Upper lobe of right lung (tissue), 1 donor: ENCODE measurements at regions of chr2 and their contacts with region 1.

Region 1: GRCh38 chr2:96951093-96951654 is 35.2 kb downstream of the FAM178B start:
- DNase-seq: peak; percentile 89
- ATAC-seq: peak; percentile 95
- H3K4me3 ChIP-seq: no peak overlapping the region
- H3K27ac ChIP-seq: no peak overlapping the region
- H3K4me1 ChIP-seq: peaks cover 20% of the 10 kb centered on the region
- H3K27me3 ChIP-seq: no peaks in the 10 kb centered on the region
- CTCF ChIP-seq: peak; percentile 89

Region 2: DNA sequence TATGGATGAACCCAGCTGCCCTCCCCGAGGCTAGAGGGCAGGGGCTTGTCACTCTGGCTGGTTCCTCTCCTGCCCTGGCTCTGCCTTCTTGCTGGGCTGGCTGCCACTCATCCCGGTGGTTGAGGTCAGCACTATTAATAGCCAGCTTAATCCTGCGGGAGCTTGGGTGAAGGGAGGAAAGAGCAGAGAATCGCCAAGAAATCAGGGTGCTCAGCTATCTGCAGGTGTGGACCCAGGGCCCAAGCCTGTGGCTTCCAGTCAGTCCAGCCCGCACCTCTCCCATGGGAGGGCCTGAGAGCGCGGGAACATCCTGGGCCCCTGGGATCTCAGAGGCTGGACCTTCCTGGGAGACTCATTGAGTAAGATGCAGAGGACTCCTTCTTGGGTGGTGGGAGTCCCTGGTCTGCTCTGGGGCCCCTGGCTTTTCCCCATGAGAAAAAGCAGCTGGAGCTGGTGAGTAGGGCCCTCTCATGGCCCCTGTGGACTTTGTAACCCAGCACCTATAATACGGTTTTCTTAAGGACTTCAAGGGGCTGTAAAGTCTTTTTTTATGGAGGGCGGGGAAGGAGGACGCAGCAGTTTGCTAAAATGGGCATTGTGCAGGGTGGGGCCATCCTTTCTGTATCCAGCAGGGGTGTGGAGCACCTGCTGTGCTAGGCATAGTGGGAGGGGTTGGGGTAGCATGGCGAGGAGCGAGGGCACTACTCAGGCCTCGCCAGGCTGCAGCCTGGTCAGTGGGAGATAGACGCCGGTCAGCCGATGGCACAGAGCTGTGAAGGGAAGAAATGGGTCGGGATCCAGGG is 162.5 kb before region 1 on chr2:
- intact Hi-C with region 1: no loop called
- DNase-seq: no peak
- ATAC-seq: peak; percentile 64
- H3K4me3 ChIP-seq: no peak overlapping the region
- H3K27ac ChIP-seq: no peak overlapping the region
- H3K4me1 ChIP-seq: peaks cover 12% of the 10 kb centered on the region
- H3K27me3 ChIP-seq: no peaks in the 10 kb centered on the region
- CTCF ChIP-seq: no peak

Region 3: GRCh38 chr2:96868555-96869280 is 82.5 kb before region 1 on chr2:
- intact Hi-C with region 1: loop called (anchors 5 kb)
- DNase-seq: peak; percentile 91
- ATAC-seq: peak; percentile 77
- H3K4me3 ChIP-seq: peak overlapping the region; percentile 91
- H3K27ac ChIP-seq: peak overlapping the region; percentile 94
- H3K4me1 ChIP-seq: peaks cover 54% of the 10 kb centered on the region
- H3K27me3 ChIP-seq: no peaks in the 10 kb centered on the region
- CTCF ChIP-seq: peak; percentile 64